Heart right ventricle (tissue), 16 donors: ENCODE measurements at regions of chr11 and their contacts with region 1.

Region 1: DNA sequence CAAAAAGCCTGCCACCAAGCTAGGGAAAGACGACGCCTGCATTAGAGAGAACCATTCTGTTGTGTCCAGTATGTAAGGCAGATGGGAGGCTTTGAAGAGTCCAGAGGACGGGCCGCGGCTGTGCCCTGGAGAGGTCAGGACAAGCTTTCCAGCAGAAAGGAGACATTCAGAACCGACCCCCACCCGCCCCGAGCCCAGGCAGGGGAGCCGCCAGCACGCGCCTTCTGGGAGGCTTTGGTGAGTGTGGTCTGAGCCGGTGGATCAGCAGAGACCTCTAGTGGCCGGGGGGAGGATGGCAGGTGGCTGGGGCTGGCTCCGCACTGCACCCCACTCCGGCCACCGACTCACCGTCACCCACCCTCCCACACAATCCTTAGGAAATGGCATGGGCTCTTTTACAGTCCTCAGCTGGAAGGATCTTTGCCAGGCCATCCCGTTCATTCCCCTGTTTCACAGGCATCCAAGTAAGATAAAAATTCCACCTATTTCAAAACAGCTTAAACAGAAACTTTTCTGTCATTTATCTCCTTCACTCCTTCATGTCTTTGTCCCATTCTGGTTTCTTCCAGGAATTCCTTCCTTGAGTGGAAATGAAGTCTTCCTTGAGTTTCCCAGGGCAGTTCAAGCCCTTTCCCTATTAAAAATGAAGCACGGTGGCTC is 91.2 kb downstream of the FEZ1 start:
- DNase-seq: peak; percentile 73 to 77
- ATAC-seq: peak; percentile 89 to 94 (median 91)
- H3K4me3 ChIP-seq: peak overlapping the region in 2 of 10 donors; percentile 2 to 29
- H3K27ac ChIP-seq: no peak overlapping the region
- H3K4me1 ChIP-seq: peaks cover 0 to 31% (median 10%) of the 10 kb centered on the region in 9 donors
- H3K27me3 ChIP-seq: peaks cover 0 to 8% (median 0%) of the 10 kb centered on the region in 7 donors
- CTCF ChIP-seq: peak; percentile 88 to 98 (median 95)

Region 2: DNA sequence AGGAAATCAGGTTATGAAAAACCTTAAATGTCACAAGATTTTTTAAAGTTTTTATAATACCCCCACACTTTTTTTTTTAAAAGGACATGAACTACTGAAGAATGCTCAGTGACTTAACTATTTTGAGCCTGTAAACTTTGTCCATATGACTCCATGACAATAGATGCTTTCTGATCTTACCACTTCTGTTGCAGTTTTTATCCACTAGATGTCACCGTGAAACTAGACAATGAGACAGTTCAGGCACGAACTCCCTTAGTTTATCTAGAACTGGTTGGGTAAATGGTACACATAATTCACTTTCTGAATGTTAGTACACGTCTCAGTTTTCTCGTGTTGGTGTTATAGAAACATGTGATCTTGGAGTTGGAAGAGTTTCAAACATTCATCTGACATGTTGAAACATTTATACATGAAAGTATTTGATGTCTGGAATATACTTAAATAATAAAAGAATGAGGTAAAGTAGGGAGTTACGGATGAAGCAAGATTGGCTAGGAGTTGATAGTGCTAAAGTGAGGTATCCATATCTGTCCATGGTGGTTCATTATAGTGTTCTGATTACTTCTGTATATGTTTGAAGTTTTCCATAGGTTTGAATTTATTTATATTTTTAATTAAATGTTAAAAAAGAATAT is 442.8 kb before region 1 on chr11:
- intact Hi-C with region 1: loop called in 2 of 10 experiments (anchors 10 kb)
- DNase-seq: peak in 1 of 2 donors; percentile 21
- ATAC-seq: peak in 7 of 8 donors; percentile 67 to 87 (median 75)
- H3K4me3 ChIP-seq: no peak overlapping the region
- H3K27ac ChIP-seq: no peak overlapping the region
- H3K4me1 ChIP-seq: no peaks in the 10 kb centered on the region
- H3K27me3 ChIP-seq: no peaks in the 10 kb centered on the region
- CTCF ChIP-seq: peak; percentile 28 to 80 (median 72)

Region 3: GRCh38 chr11:125091247-125091876 is 313.5 kb before region 1 on chr11:
- intact Hi-C with region 1: loop called in 8 of 10 experiments (anchors 1 to 10 kb)
- DNase-seq: peak in 1 of 2 donors; percentile 42
- ATAC-seq: peak; percentile 77 to 93 (median 86)
- H3K4me3 ChIP-seq: no peak overlapping the region
- H3K27ac ChIP-seq: peak overlapping the region in 1 of 10 donors; percentile 49
- H3K4me1 ChIP-seq: peaks cover 0 to 10% (median 5%) of the 10 kb centered on the region in 9 donors
- H3K27me3 ChIP-seq: no peaks in the 10 kb centered on the region
- CTCF ChIP-seq: peak; percentile 46 to 82 (median 70)

Region 4: GRCh38 chr11:125164422-125165110 is 240.3 kb before region 1 on chr11 and contains the start of gene PKNOX2:
- intact Hi-C with region 1: loop called in 9 of 10 experiments (anchors 1 to 10 kb)
- DNase-seq: peak; percentile 81 to 83
- ATAC-seq: peak; percentile 79 to 86 (median 84)
- H3K4me3 ChIP-seq: peak within 1 kb of the TSS; percentile 58 to 80 (median 74)
- H3K27ac ChIP-seq: peak within 1 kb of the TSS; percentile 29 to 87 (median 80)
- H3K4me1 ChIP-seq: peaks cover 2 to 54% (median 34%) of the 10 kb centered on the region in 9 donors
- H3K27me3 ChIP-seq: peaks cover 0 to 82% (median 23%) of the 10 kb centered on the region in 7 donors
- CTCF ChIP-seq: peak; percentile 43 to 81 (median 66)
- total RNA-seq, gene PKNOX2: 3.1 to 5.8 (median 4.9) TPM

Region 5: GRCh38 chr11:125351033-125351867 is 53.7 kb before region 1 on chr11:
- intact Hi-C with region 1: loop called in 6 of 10 experiments (anchors 5 kb)
- DNase-seq: no peak
- ATAC-seq: no peak
- H3K4me3 ChIP-seq: no peak overlapping the region
- H3K27ac ChIP-seq: no peak overlapping the region
- H3K4me1 ChIP-seq: peaks cover 0 to 18% (median 12%) of the 10 kb centered on the region in 9 donors
- H3K27me3 ChIP-seq: peaks cover 0 to 2% (median 0%) of the 10 kb centered on the region in 7 donors
- CTCF ChIP-seq: no peak